ENCODE measurements at regions of chr19 and their contacts with region 1.

Region 1: DNA sequence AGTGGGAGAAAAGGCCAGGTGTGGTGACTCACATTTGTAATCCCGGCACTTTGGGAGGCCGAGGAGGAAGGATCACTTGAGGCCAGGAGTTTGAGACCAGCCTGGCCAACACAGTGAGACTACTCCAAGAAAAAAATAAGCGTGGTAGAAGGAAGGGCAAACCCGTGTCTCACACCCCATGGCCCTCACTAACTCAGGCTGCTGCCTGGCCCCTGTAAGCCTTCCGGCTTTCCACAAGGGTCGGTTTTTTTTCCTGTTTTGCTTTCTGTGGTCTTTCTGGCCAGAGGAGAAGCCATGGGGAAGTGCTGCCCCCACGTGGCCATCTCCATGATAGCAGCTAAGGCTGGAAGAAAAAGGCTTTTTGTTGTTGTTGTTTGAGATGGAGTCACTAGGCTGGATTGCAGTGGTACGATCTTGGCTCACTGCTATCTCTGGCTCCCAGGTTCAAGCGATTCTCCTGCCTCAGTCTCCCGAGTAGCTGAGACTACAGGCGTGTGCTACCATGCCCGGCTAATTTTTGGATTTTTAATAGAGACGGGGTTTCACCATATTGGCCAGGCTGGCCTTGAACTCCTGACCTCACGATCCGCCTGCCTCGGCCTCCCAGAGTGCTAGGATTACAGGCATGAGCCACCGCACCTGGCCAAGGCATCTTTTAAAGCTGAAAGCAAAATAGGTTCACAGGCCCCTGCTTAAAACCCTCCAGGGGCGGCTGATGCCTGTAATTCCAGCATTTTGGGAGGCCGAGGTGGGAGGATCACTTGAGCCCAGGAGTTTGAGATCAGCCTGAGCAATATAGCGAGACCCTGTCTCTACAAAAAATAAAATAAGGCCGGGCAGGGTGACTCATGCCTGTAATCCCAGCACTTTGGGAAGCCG is 7.5 kb upstream of the ARHGEF18 start:
- DNase-seq: peak; percentile 7
- H3K4me3 ChIP-seq: no peak overlapping the region
- H3K27me3 ChIP-seq: no peaks in the 10 kb centered on the region; the same call in none of the 2 replicates
- CTCF ChIP-seq: peak; percentile 92

Region 2: GRCh38 chr19:7098701-7099596 is 242.2 kb before region 1 on chr19:
- CTCF ChIA-PET with region 1: interaction called, 83 read pairs
- POLR2A ChIA-PET with region 1: interaction called, 5 read pairs
- DNase-seq: peak; percentile 63
- H3K4me3 ChIP-seq: peak overlapping the region; percentile 91
- H3K27me3 ChIP-seq: no peaks in the 10 kb centered on the region
- CTCF ChIP-seq: no peak

Region 3: DNA sequence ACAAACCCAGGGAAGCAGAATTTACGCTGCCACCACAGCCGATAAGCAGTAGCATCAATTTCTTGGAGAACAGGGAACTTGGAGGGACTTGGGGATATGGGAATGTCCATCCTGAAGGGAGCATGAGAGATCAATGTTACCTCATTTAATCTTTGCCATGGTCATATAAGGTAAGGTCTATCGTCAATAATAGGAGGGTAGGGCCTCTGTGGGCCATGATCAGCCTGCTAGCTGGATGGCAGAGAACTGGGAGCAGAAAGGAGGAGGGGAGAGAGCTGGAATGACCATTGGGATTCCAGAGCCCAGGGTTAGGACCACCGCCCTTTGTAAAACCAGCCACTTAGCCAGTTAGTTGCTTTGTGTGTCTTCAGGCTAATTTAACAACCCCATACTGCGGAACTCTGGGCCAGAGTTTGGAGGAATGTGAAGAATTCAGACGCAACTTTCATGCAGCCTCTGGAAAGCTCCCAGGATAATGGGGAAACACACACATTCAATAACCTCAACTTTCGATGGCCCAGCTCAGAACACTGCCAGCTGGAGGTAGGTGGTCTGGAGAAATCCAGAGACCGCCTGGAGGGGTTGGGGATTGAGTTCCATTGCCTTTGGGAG is 231.4 kb before region 1 on chr19:
- CTCF ChIA-PET with region 1: interaction called, 12 read pairs
- POLR2A ChIA-PET with region 1: no interaction called
- DNase-seq: no peak
- H3K4me3 ChIP-seq: no peak overlapping the region
- H3K27me3 ChIP-seq: no peaks in the 10 kb centered on the region
- CTCF ChIP-seq: no peak

Region 4: DNA sequence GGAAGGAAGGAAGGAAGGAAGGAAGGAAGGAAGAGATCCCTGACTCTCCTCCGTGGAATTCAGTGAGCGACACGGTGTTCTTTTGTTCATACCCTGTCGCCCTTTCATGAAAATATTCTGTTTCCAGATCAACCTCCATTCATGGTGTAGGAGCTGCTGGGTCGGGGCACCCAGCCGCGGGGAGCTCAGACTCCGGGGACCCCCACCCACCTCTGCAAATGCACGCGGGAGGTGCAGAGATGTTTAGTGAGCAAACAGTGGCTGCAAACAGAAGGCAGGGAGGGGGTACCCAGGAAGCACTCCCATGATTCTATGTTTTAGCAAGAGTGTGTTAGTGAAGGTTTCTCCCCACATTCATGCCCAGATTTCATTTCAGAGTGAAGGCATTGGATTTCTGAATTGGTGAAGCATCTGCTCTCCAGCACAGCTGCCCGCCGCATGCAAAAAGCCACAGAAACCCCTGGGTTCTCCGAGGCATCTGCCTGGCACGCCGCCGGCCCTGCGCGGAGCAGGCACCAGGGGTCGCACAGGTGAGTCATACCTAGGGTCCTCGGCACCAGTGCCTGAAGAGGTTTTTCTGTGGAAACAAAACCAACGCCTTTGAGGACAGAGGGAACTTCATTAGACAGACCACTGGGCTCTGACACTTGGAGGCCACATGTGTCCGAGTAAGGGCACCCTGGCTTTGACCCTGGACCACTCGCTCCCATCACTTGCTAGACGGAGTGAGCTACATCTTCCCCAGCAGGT is 191.1 kb before region 1 on chr19:
- CTCF ChIA-PET with region 1: interaction called, 36 read pairs
- POLR2A ChIA-PET with region 1: no interaction called
- DNase-seq: no peak
- H3K4me3 ChIP-seq: no peak overlapping the region
- H3K27me3 ChIP-seq: no peaks in the 10 kb centered on the region
- CTCF ChIP-seq: no peak

Measured in BJ (cell line).